CD8-positive, alpha-beta T cell (primary cell): ENCODE measurements at regions of chr22 and their contacts with region 1.

Region 1: GRCh38 chr22:26642465-26643417 is 14.6 kb upstream of the MIAT start:
- DNase-seq: peak; percentile 16 to 90 (median 82)
- ATAC-seq: peak; percentile 77
- H3K4me3 ChIP-seq: no peak overlapping the region
- H3K4me3 Mint-ChIP-seq: peak overlapping the region; percentile 53
- H3K27ac ChIP-seq: peak overlapping the region; percentile 29 to 79
- H3K27ac Mint-ChIP-seq: peak overlapping the region; percentile 89
- H3K4me1 ChIP-seq: peaks cover 69% of the 10 kb centered on the region
- H3K4me1 Mint-ChIP-seq: peaks cover 74% of the 10 kb centered on the region
- H3K27me3 ChIP-seq: no peaks in the 10 kb centered on the region
- H3K27me3 Mint-ChIP-seq: no peaks in the 10 kb centered on the region
- CTCF ChIP-seq: peak; percentile 34

Region 2: DNA sequence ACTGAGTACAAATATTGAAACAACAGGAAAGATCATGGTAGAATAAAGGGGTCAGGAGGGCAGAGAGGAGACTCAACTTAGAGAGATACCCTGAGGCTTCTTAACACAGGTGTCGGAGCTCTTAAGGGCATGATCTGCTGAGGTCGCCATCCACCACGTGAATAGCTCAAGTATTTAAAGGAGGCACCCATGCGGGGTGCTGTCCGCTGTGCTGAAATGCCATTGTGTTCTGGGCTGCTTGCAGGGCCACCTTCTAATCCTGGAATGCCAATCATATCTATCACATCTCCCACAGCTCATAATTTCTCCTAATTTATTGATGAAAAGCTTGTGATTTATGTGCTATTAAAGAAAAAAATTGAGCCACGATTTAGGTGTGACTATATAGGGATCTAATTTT is 383.2 kb before region 1 on chr22:
- CTCF ChIA-PET with region 1: no interaction called
- POLR2A ChIA-PET with region 1: no interaction called
- intact Hi-C with region 1: no loop called
- DNase-seq: no peak
- ATAC-seq: no peak
- H3K4me3 ChIP-seq: no peak overlapping the region
- H3K4me3 Mint-ChIP-seq: no peak overlapping the region
- H3K27ac ChIP-seq: no peak overlapping the region
- H3K27ac Mint-ChIP-seq: no peak overlapping the region
- H3K4me1 ChIP-seq: no peaks in the 10 kb centered on the region
- H3K4me1 Mint-ChIP-seq: no peaks in the 10 kb centered on the region
- H3K27me3 ChIP-seq: no peaks in the 10 kb centered on the region
- H3K27me3 Mint-ChIP-seq: peaks cover 41% of the 10 kb centered on the region
- CTCF ChIP-seq: no peak

Region 3: GRCh38 chr22:26658671-26659478 is 16.1 kb after region 1 on chr22:
- CTCF ChIA-PET with region 1: interaction called, 5 read pairs
- POLR2A ChIA-PET with region 1: interaction called, 4 read pairs
- intact Hi-C with region 1: loop called in 1 of 2 experiments (anchors 2 kb)
- DNase-seq: peak in 8 of 9 experiments; percentile 62 to 87 (median 81)
- ATAC-seq: peak; percentile 74
- H3K4me3 ChIP-seq: peak overlapping the region; percentile 91 to 96
- H3K4me3 Mint-ChIP-seq: peak overlapping the region; percentile 91
- H3K27ac ChIP-seq: peak overlapping the region; percentile 21 to 57
- H3K27ac Mint-ChIP-seq: peak overlapping the region; percentile 96
- H3K4me1 ChIP-seq: peaks cover 20% of the 10 kb centered on the region
- H3K4me1 Mint-ChIP-seq: peaks cover 30% of the 10 kb centered on the region
- H3K27me3 ChIP-seq: no peaks in the 10 kb centered on the region
- H3K27me3 Mint-ChIP-seq: no peaks in the 10 kb centered on the region
- CTCF ChIP-seq: no peak